RWPE1 (cell line): ENCODE measurements at regions of chr10 and their contacts with region 1.

Region 1: GRCh38 chr10:80205478-80206276 is at the start of gene ANXA11:
- DNase-seq: peak; percentile 86
- H3K27ac ChIP-seq: peak within 1 kb of the TSS; percentile 93
- CTCF ChIP-seq: no peak

Region 2: DNA sequence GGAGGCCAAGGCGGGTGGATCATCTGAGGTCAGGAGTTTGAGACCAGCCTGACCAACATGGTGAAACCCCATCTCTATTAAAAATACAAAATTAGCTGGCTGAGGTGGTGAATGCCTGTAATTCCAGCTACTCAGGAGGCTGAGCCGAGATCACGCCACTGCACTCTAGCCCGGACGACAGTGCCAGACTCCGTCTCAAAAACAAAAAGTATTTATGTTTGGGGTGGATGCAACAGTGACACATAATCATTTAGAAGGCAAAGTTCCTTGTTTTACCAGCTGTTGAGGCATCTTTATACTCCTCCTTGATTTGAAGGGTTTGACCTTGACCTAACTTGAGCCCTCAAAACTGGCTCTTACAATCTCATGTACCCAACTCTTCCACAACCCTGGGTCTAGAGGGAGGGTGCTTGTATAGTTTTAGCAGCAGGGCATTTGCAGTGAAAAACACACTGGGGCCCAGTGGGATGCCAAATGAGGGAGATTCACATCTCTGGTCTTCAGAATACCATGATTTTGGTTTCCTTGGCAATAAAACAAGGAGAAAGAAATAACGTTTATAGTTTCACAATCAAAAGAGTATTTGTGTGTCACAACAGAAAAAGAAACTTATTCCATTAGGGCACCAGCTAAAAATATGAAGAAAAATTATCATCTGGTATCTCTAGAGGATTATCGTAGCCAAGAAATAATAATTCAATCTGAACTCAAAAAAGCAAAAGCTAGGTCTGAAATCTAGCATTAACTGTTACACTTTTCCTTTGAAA is 141.4 kb before region 1 on chr10:
- CTCF ChIA-PET with region 1: no interaction called
- POLR2A ChIA-PET with region 1: no interaction called
- DNase-seq: no peak
- H3K27ac ChIP-seq: no peak overlapping the region
- CTCF ChIP-seq: no peak

Region 3: GRCh38 chr10:80132299-80133139 is 73.2 kb before region 1 on chr10 and contains the start of gene PLAC9:
- CTCF ChIA-PET with region 1: no interaction called
- POLR2A ChIA-PET with region 1: no interaction called
- DNase-seq: no peak
- H3K27ac ChIP-seq: no peak within 1 kb of the TSS
- CTCF ChIP-seq: no peak

Region 4: GRCh38 chr10:80144067-80144695 is 61.5 kb before region 1 on chr10:
- CTCF ChIA-PET with region 1: interaction called, 12 read pairs
- POLR2A ChIA-PET with region 1: no interaction called
- DNase-seq: peak; percentile 42
- H3K27ac ChIP-seq: no peak overlapping the region
- CTCF ChIP-seq: 0 out of 2 replicates have a peak, but pooled peaks have one; percentile 9

Region 5: DNA sequence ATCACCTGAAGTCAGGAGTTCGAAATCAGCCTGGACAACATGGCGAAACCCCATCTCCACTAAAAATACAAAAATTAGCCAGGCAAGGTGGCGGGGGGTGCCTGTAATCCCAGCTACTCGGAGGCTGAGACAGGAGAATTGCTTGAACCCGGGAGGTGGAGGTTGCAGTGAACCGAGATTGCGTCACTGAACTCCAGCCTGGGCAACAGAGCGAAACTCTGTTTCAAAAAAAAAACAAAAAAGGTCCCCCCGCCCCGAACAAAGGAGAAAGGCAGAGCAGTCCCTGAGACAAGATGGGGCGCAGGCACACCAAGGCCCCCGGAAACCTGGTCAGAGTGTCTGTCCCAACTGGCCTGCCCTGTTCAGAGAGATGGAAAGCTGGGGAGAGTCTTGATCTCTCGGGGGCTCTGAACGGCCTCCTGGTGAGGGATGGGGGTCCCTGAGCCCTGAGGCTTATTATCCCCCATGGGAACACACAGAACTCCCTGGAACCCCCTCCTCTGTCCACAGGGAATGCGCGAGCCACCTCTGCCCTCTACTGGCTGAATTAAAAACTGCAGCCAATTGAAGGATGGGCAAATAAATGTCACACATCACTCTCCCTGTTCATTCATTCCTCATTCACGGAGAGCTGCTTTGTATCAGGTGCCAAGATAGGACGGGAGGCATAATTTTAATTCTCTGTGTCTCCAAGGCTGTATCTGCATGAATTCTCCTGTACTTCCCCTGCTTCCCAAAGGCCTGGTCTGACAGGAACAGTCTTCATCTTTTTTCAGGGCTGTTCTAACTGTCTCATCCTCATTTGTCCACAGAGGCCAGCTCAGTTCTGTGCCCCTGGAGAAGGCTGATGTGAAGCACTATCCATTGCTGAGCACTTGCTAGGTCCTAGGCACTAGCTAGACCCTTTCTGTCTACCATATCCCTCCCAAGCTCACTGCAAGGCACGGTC is 54.9 kb after region 1 on chr10:
- CTCF ChIA-PET with region 1: interaction called, 10 read pairs
- POLR2A ChIA-PET with region 1: no interaction called
- DNase-seq: peak; percentile 42
- H3K27ac ChIP-seq: no peak overlapping the region
- CTCF ChIP-seq: peak; percentile 89